Activated CD4-positive, alpha-beta T cell treated with anti-CD3 and anti-CD28 coated beads for 36 hours (primary cell): ENCODE measurements at regions of chr2 and their contacts with region 1.

Region 1: GRCh38 chr2:176140513-176141317 is 10.6 kb upstream of the HOXD4 start:
- DNase-seq: peak; percentile 85
- ATAC-seq: peak; percentile 93
- H3K4me3 Mint-ChIP-seq: no peak overlapping the region
- H3K27ac Mint-ChIP-seq: no peak overlapping the region
- H3K4me1 Mint-ChIP-seq: peaks cover 17% of the 10 kb centered on the region
- H3K27me3 Mint-ChIP-seq: peaks cover 77% of the 10 kb centered on the region

Region 2: GRCh38 chr2:176157499-176158185 is 16.9 kb after region 1 on chr2:
- CTCF ChIA-PET with region 1: interaction called, 12 read pairs
- POLR2A ChIA-PET with region 1: no interaction called
- intact Hi-C with region 1: no loop called
- DNase-seq: peak; percentile 39
- ATAC-seq: no peak
- H3K4me3 Mint-ChIP-seq: peak overlapping the region; percentile 32
- H3K27ac Mint-ChIP-seq: no peak overlapping the region
- H3K4me1 Mint-ChIP-seq: peaks cover 13% of the 10 kb centered on the region
- H3K27me3 Mint-ChIP-seq: peaks cover 67% of the 10 kb centered on the region

Region 3: DNA sequence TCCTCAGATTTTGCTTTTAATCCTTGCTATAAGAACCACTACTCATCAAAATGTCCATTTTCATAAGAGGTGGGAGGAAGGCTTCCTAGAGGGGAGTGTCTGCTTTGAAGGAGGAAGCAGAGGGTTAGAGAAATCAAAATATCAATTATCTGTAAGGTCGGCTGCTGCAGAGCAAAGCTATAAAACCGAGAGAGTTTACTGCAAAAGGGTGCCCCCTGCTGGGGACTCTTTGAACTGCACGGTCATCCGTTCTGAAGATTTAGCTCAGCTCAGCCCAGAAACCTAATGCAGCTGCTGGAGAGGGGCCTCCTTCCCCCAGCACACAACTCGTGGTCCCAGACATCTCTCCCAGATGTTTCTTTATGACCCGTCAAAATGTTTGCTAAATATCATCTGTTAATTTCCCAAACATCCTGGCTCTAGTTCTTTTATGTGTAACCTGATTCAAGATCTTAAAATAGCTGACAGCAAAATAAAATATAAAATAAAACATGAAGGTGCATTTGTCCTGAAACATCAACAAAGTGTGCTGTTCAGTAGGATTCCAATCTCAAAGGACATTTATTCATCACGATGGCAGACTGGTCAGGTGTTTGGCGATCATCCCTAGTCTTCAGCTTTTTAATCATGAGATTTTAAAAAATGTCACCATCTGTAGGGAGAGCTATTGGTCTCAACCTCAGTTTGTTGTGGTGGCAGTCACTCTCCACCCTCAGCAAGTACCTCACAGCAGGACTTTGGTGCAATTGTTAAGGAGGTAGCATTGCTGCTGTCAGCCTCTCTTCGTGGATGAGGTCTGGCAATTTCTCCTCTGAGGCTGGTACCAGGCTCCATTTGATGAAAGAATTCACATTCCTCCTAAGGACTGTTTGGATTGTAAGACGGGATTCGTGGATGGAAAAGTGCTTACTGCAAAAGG is 314.4 kb after region 1 on chr2:
- CTCF ChIA-PET with region 1: interaction called, 59 read pairs
- POLR2A ChIA-PET with region 1: no interaction called
- intact Hi-C with region 1: loop called (anchors 1 kb)
- DNase-seq: peak; percentile 91
- ATAC-seq: peak; percentile 57
- H3K4me3 Mint-ChIP-seq: no peak overlapping the region
- H3K27ac Mint-ChIP-seq: no peak overlapping the region
- H3K4me1 Mint-ChIP-seq: no peaks in the 10 kb centered on the region
- H3K27me3 Mint-ChIP-seq: peaks cover 31% of the 10 kb centered on the region

Region 4: DNA sequence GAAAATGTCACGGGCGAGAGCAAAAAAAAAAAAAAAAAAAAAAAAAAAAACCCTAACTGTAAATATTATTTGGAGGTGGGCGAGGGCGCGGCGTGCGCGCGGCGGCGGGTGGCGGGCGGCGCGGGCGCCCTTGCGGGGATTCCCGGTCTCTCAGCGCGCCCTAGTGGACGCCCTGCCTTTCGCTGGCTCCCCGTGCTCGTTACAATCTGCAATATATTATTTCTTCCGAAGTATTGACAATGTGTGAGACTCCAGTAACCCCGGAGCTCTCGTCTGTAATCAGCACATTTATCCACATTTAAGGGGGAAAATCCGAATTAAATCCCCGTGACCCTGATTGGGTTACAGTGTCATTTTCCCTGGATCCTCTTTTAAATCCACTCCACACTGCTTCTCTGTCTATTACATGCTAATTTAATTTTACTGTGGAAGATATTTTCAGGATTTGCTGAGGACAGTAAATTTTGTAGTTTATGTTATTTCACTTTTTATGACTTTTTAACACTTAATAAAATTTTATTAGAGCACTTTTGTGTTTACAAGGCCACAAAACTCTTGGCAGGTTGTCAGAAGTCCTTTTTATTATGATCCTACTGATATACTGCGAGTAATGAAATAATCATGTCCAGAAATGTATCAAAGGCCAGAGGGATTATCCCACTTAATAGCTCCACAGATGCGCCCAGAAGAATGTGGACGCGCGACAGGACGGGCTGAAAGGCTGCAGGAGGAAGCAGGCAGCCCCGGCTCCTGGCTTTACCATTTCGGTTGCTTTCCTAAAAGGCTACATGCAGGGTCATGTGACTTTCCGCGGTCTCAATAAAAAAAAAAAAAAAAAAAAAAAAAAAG is 497.7 kb after region 1 on chr2:
- CTCF ChIA-PET with region 1: interaction called, 5 read pairs
- POLR2A ChIA-PET with region 1: no interaction called
- intact Hi-C with region 1: loop called in 1 of 2 experiments (anchors 1 kb)
- DNase-seq: peak; percentile 80
- ATAC-seq: peak; percentile 86
- H3K4me3 Mint-ChIP-seq: peak overlapping the region; percentile 55
- H3K27ac Mint-ChIP-seq: no peak overlapping the region
- H3K4me1 Mint-ChIP-seq: peaks cover 5% of the 10 kb centered on the region
- H3K27me3 Mint-ChIP-seq: peaks cover 44% of the 10 kb centered on the region

Region 5: DNA sequence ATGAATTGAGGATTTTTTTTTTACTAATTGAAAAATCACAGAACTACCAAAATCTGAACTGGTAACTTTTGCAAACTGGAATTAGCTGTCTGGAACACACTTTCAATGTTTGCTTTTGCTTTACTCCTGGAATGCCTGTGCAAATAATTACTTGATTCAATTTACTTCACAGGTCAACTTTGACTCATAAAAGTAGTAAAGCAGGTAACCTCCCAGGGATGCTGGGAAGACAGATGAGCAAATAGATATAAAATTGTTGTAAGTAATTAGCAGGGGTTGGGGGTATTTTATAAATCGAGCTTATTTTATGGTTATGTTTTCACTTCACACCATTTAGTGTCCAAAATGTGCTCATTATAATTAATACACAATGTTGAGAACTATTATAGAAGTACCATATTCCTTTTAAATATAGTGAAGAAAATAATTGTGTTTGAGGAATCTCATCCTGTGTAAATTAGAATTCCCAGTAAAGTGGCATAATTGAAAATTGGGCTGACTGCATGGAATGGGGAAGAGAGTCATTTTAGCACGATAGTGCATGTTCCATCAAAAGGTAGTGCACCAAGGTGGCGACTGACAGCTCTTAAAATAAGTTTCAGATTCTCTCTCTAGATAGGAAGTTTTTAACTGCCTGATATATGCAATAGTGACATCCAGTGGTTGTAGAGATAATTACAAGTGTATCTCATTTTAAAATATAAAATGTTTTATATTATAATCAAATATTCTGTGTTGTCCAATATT is 673.8 kb after region 1 on chr2:
- CTCF ChIA-PET with region 1: no interaction called
- POLR2A ChIA-PET with region 1: no interaction called
- intact Hi-C with region 1: loop called in 1 of 2 experiments (anchors 5 kb)
- DNase-seq: peak; percentile 9
- ATAC-seq: peak; percentile 43
- H3K4me3 Mint-ChIP-seq: no peak overlapping the region
- H3K27ac Mint-ChIP-seq: no peak overlapping the region
- H3K4me1 Mint-ChIP-seq: peaks cover 14% of the 10 kb centered on the region
- H3K27me3 Mint-ChIP-seq: no peaks in the 10 kb centered on the region